Prostate gland (tissue), 2 donors: ENCODE measurements at regions of chr16 and their contacts with region 1.

Region 1: GRCh38 chr16:82229796-82230619 is 60.0 kb upstream of the MPHOSPH6 start:
- DNase-seq: peak; percentile 72
- H3K4me3 ChIP-seq: no peak overlapping the region
- H3K27ac ChIP-seq: no peak overlapping the region
- H3K4me1 ChIP-seq: no peaks in the 10 kb centered on the region
- H3K27me3 ChIP-seq: no peaks in the 10 kb centered on the region
- CTCF ChIP-seq: peak; percentile 74 to 88 (median 84)
- POLR2A ChIP-seq: no peak

Region 2: DNA sequence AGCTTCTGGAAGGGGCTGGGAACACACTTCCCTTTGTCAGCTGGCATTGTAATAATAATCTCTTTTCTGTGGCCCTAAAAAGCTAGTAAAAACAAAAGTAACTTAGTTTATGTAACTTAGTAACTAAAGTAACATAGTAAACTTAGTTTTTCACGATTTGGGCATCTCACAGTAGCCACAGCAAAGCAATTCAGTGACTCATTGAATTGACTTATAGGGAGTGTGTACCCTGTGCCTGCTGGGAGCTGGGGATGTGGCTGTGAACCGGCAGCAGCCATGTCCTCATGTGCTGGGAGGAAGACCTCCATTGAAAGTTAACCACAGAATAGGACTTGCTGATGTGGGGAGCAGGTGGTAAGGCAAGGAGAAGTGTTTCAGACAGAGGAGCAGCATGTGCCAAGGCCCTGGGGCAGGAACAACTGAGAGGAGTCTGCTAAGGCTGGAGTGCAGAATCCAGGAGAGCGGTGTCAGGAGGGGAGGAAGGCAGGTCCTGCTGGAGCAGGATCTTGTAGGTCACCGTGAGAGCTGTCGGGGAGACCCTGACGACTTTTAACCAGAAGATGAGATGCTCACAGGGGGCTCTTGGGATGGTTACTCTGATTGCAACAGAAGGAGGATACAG is 338.2 kb before region 1 on chr16:
- intact Hi-C with region 1: loop called (anchors 5 kb)
- DNase-seq: no peak
- H3K4me3 ChIP-seq: no peak overlapping the region
- H3K27ac ChIP-seq: no peak overlapping the region
- H3K4me1 ChIP-seq: no peaks in the 10 kb centered on the region
- H3K27me3 ChIP-seq: peaks cover 2% of the 10 kb centered on the region
- CTCF ChIP-seq: no peak
- POLR2A ChIP-seq: no peak

Region 3: GRCh38 chr16:81996664-81997622 is 233.1 kb before region 1 on chr16:
- intact Hi-C with region 1: no loop called
- DNase-seq: no peak
- H3K4me3 ChIP-seq: no peak overlapping the region
- H3K27ac ChIP-seq: no peak overlapping the region
- H3K4me1 ChIP-seq: no peaks in the 10 kb centered on the region
- H3K27me3 ChIP-seq: no peaks in the 10 kb centered on the region
- CTCF ChIP-seq: peak in 1 of 4 experiments; percentile 22
- POLR2A ChIP-seq: no peak

Region 4: GRCh38 chr16:82031116-82032084 is 198.6 kb before region 1 on chr16:
- intact Hi-C with region 1: loop called (anchors 5 kb)
- DNase-seq: peak; percentile 36
- H3K4me3 ChIP-seq: no peak overlapping the region
- H3K27ac ChIP-seq: no peak overlapping the region
- H3K4me1 ChIP-seq: no peaks in the 10 kb centered on the region
- H3K27me3 ChIP-seq: peaks cover 2% of the 10 kb centered on the region
- CTCF ChIP-seq: peak in 3 of 4 experiments; percentile 22 to 62 (median 53)
- POLR2A ChIP-seq: no peak

Region 5: GRCh38 chr16:82287937-82288336 is 57.9 kb after region 1 on chr16:
- intact Hi-C with region 1: no loop called
- DNase-seq: no peak
- H3K4me3 ChIP-seq: no peak overlapping the region
- H3K27ac ChIP-seq: no peak overlapping the region
- H3K4me1 ChIP-seq: no peaks in the 10 kb centered on the region
- H3K27me3 ChIP-seq: no peaks in the 10 kb centered on the region
- CTCF ChIP-seq: no peak
- POLR2A ChIP-seq: no peak

Region 6: GRCh38 chr16:82329485-82330180 is 99.6 kb after region 1 on chr16:
- intact Hi-C with region 1: no loop called
- DNase-seq: peak; percentile 88
- H3K4me3 ChIP-seq: no peak overlapping the region
- H3K27ac ChIP-seq: peak overlapping the region; percentile 77 to 85
- H3K4me1 ChIP-seq: peaks cover 4% of the 10 kb centered on the region
- H3K27me3 ChIP-seq: no peaks in the 10 kb centered on the region
- CTCF ChIP-seq: no peak
- POLR2A ChIP-seq: no peak